Mammary epithelial cell (primary cell): ENCODE measurements at regions of chr2 and their contacts with region 1.

Region 1: DNA sequence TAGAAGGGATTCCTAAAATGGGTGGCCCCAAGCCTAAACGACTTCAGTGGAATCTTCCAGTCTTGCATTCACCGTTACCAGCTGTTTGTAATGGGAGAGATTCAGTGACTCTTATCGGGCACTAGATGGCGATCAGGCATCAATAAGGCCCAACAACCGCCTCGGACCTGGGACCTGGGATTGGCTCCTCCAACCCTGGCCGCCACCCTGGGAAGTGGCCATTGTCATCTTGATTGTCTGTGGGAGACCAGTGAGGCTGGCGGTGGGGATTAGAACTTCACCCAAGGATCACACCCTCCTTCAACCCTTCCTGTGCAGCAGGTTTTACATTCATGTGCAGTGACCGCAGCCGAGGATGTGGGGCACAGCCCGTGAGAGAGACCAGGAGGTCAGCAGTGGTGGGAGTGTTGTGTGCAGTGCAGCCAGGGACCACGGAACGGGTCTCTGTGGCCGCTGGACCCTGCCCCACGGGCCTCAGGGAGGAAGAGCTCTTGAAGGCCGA is 85.3 kb downstream of the SPP2 start:
- DNase-seq: peak; percentile 80
- H3K4me3 ChIP-seq: no peak overlapping the region
- H3K27ac ChIP-seq: peak overlapping the region; percentile 70
- H3K4me1 ChIP-seq: peaks cover 83% of the 10 kb centered on the region
- H3K27me3 ChIP-seq: no peaks in the 10 kb centered on the region
- CTCF ChIP-seq: peak; percentile 82 to 84

Region 2: DNA sequence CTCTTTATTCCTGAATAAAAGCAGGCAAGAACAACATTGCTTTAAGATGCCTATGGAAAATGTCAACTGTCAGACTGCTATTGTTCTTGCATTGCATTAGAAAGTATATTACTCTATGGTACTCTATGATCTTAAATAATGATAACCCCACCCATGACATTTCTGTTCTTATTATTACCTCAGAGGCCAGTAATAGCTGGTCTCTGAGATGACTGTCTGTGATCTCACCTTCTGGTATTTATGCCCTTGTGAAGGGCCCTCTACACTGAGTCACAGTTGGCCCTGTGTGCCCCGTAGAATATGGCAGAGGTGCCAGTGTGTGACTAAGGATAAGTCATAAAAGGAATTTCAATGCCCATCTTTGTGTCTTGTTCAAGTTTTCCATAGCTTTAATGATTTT is 24.2 kb before region 1 on chr2:
- CTCF ChIA-PET with region 1: no interaction called
- dilution Hi-C with region 1: no loop called
- in situ Hi-C with region 1: no loop called
- intact Hi-C with region 1: loop called (anchors 1 kb)
- DNase-seq: peak; percentile 96
- H3K4me3 ChIP-seq: no peak overlapping the region
- H3K27ac ChIP-seq: peak overlapping the region; percentile 30
- H3K4me1 ChIP-seq: peaks cover 32% of the 10 kb centered on the region
- H3K27me3 ChIP-seq: no peaks in the 10 kb centered on the region
- CTCF ChIP-seq: no peak

Region 3: GRCh38 chr2:234169187-234169570 is 33.4 kb after region 1 on chr2:
- CTCF ChIA-PET with region 1: no interaction called
- dilution Hi-C with region 1: no loop called
- in situ Hi-C with region 1: no loop called
- intact Hi-C with region 1: no loop called
- DNase-seq: peak; percentile 12
- H3K4me3 ChIP-seq: no peak overlapping the region
- H3K27ac ChIP-seq: no peak overlapping the region
- H3K4me1 ChIP-seq: no peaks in the 10 kb centered on the region
- H3K27me3 ChIP-seq: no peaks in the 10 kb centered on the region
- CTCF ChIP-seq: no peak

Region 4: GRCh38 chr2:234257856-234258561 is 122.2 kb after region 1 on chr2:
- CTCF ChIA-PET with region 1: no interaction called
- dilution Hi-C with region 1: no loop called
- in situ Hi-C with region 1: loop called in 1 of 2 experiments (anchors 5 kb)
- intact Hi-C with region 1: loop called (anchors 1 kb)
- DNase-seq: peak; percentile 99
- H3K4me3 ChIP-seq: no peak overlapping the region
- H3K27ac ChIP-seq: peak overlapping the region; percentile 99
- H3K4me1 ChIP-seq: peaks cover 76% of the 10 kb centered on the region
- H3K27me3 ChIP-seq: no peaks in the 10 kb centered on the region
- CTCF ChIP-seq: peak; percentile 82 to 83

Region 5: GRCh38 chr2:234377761-234378391 is 242.1 kb after region 1 on chr2:
- CTCF ChIA-PET with region 1: no interaction called
- dilution Hi-C with region 1: no loop called
- in situ Hi-C with region 1: no loop called
- intact Hi-C with region 1: loop called (anchors 10 kb)
- DNase-seq: no peak
- H3K4me3 ChIP-seq: no peak overlapping the region
- H3K27ac ChIP-seq: no peak overlapping the region
- H3K4me1 ChIP-seq: peaks cover 34% of the 10 kb centered on the region
- H3K27me3 ChIP-seq: no peaks in the 10 kb centered on the region
- CTCF ChIP-seq: no peak

Region 6: DNA sequence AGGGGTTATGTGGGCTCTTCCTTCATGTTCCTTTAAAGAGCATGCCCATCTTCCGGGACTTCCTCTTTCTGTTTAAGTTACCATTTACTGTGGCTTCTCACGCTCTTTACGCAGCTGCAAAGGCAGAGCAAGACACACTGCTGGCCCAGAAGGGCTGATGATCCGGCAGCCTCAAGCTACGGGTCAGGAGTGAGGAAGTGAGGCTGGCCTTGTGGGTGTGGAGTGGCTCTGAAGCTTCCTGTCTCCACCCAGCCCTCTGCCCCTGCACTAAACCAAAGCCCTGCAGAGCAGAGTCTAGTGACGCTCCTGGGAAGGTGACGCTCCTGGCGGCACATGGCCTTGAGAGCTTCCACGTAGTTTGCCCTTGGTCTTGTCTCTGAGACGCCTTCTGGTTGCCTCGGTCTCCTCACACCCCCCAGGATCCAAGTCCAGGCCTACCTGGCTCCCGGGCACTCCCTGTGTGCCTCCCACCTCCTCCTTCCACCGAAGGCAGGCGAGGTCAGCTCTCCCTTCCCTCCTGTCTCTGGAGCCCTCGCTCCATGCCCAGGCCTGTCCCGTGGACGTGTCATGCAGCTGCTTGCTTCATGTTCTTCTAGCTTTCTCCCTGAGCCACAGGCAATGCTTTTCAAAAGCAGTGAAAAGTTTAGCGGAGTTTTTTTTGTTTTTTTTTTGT is 310.8 kb after region 1 on chr2:
- CTCF ChIA-PET with region 1: no interaction called
- dilution Hi-C with region 1: no loop called
- in situ Hi-C with region 1: no loop called
- intact Hi-C with region 1: loop called (anchors 1 kb)
- DNase-seq: peak; percentile 96
- H3K4me3 ChIP-seq: peak overlapping the region in 1 of 3 experiments; percentile 5
- H3K27ac ChIP-seq: peak overlapping the region; percentile 79
- H3K4me1 ChIP-seq: peaks cover 34% of the 10 kb centered on the region
- H3K27me3 ChIP-seq: no peaks in the 10 kb centered on the region
- CTCF ChIP-seq: no peak

Region 7: GRCh38 chr2:234544659-234545611 is 409.2 kb after region 1 on chr2:
- CTCF ChIA-PET with region 1: interaction called, 4 read pairs
- dilution Hi-C with region 1: no loop called
- in situ Hi-C with region 1: no loop called
- intact Hi-C with region 1: loop called (anchors 1 kb)
- DNase-seq: peak; percentile 47
- H3K4me3 ChIP-seq: no peak overlapping the region
- H3K27ac ChIP-seq: no peak overlapping the region
- H3K4me1 ChIP-seq: peaks cover 6% of the 10 kb centered on the region
- H3K27me3 ChIP-seq: no peaks in the 10 kb centered on the region
- CTCF ChIP-seq: peak; percentile 87 to 92

Region 8: DNA sequence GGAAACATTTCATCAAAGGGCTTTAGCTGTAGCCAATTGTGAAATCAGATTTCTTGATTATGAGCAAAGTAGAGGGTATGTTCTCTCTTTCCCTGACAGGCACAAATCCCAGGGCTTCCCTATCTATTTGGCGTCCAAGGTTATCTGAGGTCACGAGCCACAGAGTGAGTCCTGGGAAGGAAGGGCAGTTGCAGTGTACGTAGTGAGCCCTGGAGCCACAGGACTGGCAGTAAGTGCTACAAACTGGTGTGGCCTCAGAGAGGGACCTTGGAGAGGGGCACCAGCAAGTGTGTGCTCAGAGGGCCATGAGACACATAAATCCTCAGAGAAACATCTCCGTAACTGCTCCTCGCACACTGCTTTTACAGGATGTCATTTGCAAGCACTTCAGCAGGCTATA is 700.5 kb after region 1 on chr2:
- CTCF ChIA-PET with region 1: no interaction called
- dilution Hi-C with region 1: no loop called
- in situ Hi-C with region 1: no loop called
- intact Hi-C with region 1: no loop called
- DNase-seq: no peak
- H3K4me3 ChIP-seq: no peak overlapping the region
- H3K27ac ChIP-seq: no peak overlapping the region
- H3K4me1 ChIP-seq: peaks cover 9% of the 10 kb centered on the region
- H3K27me3 ChIP-seq: no peaks in the 10 kb centered on the region
- CTCF ChIP-seq: no peak